Activated CD4-positive, alpha-beta T cell treated with anti-CD3 and anti-CD28 coated beads, Interleukin-2, amount 10 ng/mL, durations not matched to agents 24 days and 14 days (primary cell): ENCODE measurements at regions of chr16 and their contacts with region 1.

Region 1: DNA sequence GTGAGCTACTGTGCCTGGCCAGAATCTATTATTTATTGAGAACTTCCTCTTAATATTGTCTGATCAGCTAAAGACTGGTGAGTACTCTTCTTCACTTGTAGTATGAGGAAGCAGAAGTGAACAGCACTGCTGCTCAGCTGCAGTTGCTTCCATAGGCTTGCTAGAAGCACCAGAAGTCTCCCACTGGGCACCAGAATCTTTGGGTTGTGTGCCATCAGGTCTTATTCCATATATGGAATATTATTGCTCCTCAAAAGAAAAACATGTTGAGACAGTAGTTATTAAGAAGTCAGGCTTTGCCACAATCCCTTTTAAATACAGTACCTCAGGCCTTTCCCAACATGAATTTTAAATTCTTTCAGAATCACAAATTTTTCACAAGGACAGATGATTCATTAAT is 17.2 kb downstream of the SNTB2 start:
- DNase-seq: no peak
- H3K4me3 Mint-ChIP-seq: no peak overlapping the region
- H3K27ac Mint-ChIP-seq: peak overlapping the region; percentile 71
- H3K4me1 Mint-ChIP-seq: peaks cover 11% of the 10 kb centered on the region
- H3K27me3 Mint-ChIP-seq: no peaks in the 10 kb centered on the region

Region 2: GRCh38 chr16:69186642-69187445 is 17.3 kb before region 1 on chr16 and contains the start of gene SNTB2:
- intact Hi-C with region 1: loop called (anchors 1 kb)
- DNase-seq: peak; percentile 97
- H3K4me3 Mint-ChIP-seq: peak within 1 kb of the TSS; percentile 96
- H3K27ac Mint-ChIP-seq: peak within 1 kb of the TSS; percentile 98
- H3K4me1 Mint-ChIP-seq: peaks cover 47% of the 10 kb centered on the region
- H3K27me3 Mint-ChIP-seq: no peaks in the 10 kb centered on the region
- total RNA-seq, gene SNTB2: 21.4 and 23.3 TPM in 2 replicates

Region 3: GRCh38 chr16:69270395-69270794 is 66.2 kb after region 1 on chr16:
- intact Hi-C with region 1: no loop called
- DNase-seq: no peak
- H3K4me3 Mint-ChIP-seq: no peak overlapping the region
- H3K27ac Mint-ChIP-seq: no peak overlapping the region
- H3K4me1 Mint-ChIP-seq: peaks cover 5% of the 10 kb centered on the region
- H3K27me3 Mint-ChIP-seq: no peaks in the 10 kb centered on the region

Region 4: DNA sequence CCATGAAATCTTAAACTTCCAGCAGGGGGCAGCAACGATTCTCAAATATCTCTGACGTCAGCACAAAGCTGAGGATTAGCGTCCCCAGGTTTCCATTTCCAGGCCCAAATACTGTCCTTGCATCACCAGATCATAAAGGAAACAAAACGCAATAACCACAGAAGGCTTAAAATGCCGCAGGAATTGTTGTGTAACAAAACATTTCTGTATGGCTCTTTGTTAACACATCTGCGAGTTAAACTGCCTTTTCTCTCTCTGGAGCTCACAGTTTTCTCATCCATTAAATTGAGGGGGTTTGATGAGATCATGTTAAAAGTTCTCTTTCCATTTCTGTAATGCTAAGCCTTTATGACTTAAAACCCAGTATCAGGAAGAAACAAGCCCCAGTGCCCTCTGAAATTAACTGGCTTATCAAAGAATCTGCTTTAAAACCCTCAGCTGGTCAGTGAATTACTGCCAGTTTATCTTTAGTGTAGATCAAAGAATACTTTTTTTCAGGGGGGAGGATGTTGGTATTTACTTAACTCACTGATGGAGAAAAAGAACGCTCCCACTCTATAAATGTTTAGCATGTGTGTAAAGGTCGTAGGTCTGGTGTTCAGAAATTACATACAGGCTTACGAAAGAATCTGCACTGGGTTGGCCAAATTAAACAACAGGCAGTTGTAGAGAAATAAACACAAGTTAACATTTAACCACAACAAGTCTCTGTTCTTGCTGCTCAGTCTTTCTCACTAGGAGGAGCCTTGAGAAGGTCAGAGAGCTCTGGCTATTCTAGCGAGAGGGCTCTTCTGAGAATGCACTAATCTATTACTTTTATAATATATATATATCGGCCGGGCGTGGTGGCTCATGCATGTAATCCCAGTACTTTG is 192.3 kb after region 1 on chr16:
- intact Hi-C with region 1: no loop called
- DNase-seq: peak; percentile 92
- H3K4me3 Mint-ChIP-seq: peak overlapping the region; percentile 4
- H3K27ac Mint-ChIP-seq: peak overlapping the region; percentile 15
- H3K4me1 Mint-ChIP-seq: peaks cover 15% of the 10 kb centered on the region
- H3K27me3 Mint-ChIP-seq: peaks cover 3% of the 10 kb centered on the region